AG04449 (cell line): ENCODE measurements at regions of chr15 and their contacts with region 1.

Region 1: GRCh38 chr15:63610200-63610841 is 13.1 kb downstream of the FBXL22 start:
- DNase-seq: no peak
- H3K4me3 ChIP-seq: no peak overlapping the region
- CTCF ChIP-seq: peak; percentile 82

Region 2: DNA sequence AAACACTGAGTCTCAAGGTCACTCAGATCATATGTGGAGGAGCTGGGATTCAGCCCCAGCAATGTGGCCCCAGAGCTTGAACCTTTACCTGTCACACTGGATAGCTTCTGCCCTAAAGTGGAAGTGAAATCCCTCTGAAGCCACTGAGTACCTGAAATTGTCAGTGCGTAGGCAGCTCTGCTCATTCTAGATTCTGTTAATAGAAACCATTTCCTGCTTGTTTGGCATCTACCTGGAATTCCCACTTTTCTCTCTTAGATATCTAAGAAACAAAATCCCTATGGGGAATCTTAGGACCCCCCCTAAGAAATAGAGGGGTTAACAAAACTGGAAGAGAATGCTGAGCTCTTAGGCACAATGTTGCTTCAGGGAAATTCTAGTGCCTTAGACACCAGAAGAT is 16.6 kb after region 1 on chr15:
- CTCF ChIA-PET with region 1: interaction called, 60 read pairs
- POLR2A ChIA-PET with region 1: no interaction called
- DNase-seq: no peak
- H3K4me3 ChIP-seq: no peak overlapping the region
- CTCF ChIP-seq: no peak

Region 3: DNA sequence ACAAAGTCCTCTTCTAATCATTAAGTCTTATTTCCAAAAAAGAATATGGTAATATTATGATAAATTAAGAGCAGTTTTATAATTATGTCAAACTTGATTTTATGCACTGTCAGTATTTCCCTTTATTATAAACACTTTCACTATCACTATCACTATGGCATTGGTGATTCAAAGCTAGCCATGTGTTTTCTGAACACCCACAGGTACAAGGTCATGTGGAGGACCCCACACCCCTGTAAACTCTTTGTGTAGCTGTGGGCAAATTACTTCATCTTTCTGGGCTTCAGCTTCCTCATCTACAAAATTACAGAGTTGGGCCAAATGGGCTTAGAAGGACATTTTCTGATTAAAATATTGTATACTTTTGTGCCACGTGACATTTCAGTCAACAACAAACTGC is 28.5 kb after region 1 on chr15:
- CTCF ChIA-PET with region 1: interaction called, 60 read pairs
- POLR2A ChIA-PET with region 1: no interaction called
- DNase-seq: no peak
- H3K4me3 ChIP-seq: no peak overlapping the region
- CTCF ChIP-seq: no peak

Region 4: GRCh38 chr15:63718590-63719035 is 108.3 kb after region 1 on chr15:
- CTCF ChIA-PET with region 1: interaction called, 11 read pairs
- POLR2A ChIA-PET with region 1: no interaction called
- DNase-seq: peak; percentile 56
- H3K4me3 ChIP-seq: no peak overlapping the region
- CTCF ChIP-seq: no peak

Region 5: GRCh38 chr15:63776443-63776842 is 166.1 kb after region 1 on chr15:
- CTCF ChIA-PET with region 1: no interaction called
- POLR2A ChIA-PET with region 1: no interaction called
- DNase-seq: no peak
- H3K4me3 ChIP-seq: no peak overlapping the region
- CTCF ChIP-seq: no peak

Region 6: DNA sequence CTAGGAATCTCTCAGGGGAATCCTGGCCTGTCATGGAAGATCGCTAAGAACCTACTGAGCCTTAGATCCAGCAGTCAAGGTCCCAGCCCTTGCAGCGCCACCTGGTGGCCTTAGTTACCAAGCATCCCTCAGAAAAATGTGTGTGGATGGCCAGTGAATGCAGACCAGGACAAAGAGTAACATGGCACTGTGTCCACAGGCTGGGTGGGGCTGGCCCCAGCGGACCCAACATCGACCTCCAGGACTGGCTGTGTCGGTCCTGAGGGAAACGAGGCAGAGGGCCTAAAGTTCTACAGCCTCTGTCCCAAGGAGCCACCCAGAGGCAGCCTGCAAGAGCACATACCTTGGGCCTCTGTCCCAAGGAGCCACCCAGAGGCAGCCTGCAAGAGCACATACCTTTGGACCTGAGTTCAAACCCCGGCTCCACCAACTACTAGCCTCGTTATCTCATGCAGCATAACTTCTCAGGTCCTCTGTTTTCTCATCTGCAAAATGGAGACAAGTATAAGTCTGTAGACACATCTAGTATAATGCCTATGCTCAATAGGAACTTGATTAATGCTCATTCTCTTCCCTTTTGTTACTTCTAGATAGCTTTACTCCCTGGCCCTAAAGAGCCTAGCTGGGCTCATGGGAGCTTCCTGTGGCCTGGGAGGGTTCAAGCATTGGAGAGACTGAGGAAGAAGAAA is 280.9 kb after region 1 on chr15:
- CTCF ChIA-PET with region 1: interaction called, 18 read pairs
- POLR2A ChIA-PET with region 1: no interaction called
- DNase-seq: no peak
- H3K4me3 ChIP-seq: no peak overlapping the region
- CTCF ChIP-seq: peak; percentile 91